GM12878 (cell line): ENCODE measurements at regions of chr16 and their contacts with region 1.

Region 1: GRCh38 chr16:35631261-35631945 is 2172.0 kb downstream of the TP53TG3F start:
- DNase-seq: no peak
- ATAC-seq: no peak
- H3K4me3 ChIP-seq: no peak overlapping the region
- H3K27ac ChIP-seq: no peak overlapping the region
- H3K4me1 ChIP-seq: no peaks in the 10 kb centered on the region
- H3K27me3 ChIP-seq: no peaks in the 10 kb centered on the region
- CTCF ChIP-seq: no peak
- EP300 ChIP-seq: no peak
- POLR2A ChIP-seq: no peak
- RAD21 ChIP-seq: no peak

Region 2: DNA sequence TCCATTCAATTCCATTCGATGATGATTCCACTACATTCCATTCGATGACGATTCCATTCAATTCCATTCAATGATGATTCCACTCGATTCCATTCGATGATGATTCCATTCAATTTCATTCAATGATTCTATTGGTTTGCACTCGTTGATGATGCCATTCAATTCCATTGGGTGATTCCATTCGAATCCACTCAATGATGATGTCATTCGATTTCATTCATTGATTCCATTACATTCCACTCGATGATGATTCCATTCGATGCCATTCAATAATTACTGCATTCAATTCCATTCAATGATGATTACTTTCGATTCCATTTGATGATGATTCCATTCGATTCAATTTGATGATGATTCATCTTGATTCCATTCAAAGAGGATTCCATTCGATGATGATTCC is 872.6 kb before region 1 on chr16:
- CTCF ChIA-PET with region 1: no interaction called
- POLR2A ChIA-PET with region 1: no interaction called
- RAD21 ChIA-PET with region 1: no interaction called
- SMC1A ChIA-PET with region 1: no interaction called
- in situ Hi-C with region 1: loop called (anchors 25 kb)
- intact Hi-C with region 1: no loop called
- DNase-seq: no peak
- ATAC-seq: no peak
- H3K4me3 ChIP-seq: no peak overlapping the region
- H3K27ac ChIP-seq: no peak overlapping the region
- H3K4me1 ChIP-seq: no peaks in the 10 kb centered on the region
- H3K27me3 ChIP-seq: no peaks in the 10 kb centered on the region
- CTCF ChIP-seq: no peak
- EP300 ChIP-seq: no peak
- POLR2A ChIP-seq: no peak
- RAD21 ChIP-seq: no peak

Region 3: DNA sequence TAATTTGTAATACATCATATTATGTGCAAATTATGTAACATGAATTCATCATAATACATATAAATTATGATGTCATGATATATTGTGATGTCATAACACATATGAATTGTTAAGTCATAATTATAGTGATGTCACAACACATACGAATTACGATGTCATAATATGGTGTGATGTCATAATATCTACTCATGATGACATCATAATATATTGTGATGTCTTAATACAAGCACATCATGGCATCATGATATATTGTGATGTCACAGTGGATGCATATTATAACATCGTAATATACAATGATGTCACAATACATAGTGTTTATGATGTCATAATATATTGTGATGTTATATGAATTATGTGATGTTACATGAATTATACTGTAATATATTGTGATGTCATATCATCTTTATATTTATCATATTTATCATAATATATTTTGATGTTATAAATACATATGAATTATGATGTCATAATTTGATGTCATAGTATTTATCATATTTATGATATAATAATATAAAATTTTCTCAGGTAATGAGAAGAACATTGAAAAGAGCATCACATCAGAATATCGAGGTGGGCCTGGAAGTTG is 379.0 kb before region 1 on chr16:
- CTCF ChIA-PET with region 1: no interaction called
- POLR2A ChIA-PET with region 1: no interaction called
- RAD21 ChIA-PET with region 1: no interaction called
- SMC1A ChIA-PET with region 1: no interaction called
- in situ Hi-C with region 1: loop called (anchors 25 kb)
- intact Hi-C with region 1: no loop called
- DNase-seq: no peak
- ATAC-seq: no peak
- H3K4me3 ChIP-seq: no peak overlapping the region
- H3K27ac ChIP-seq: no peak overlapping the region
- H3K4me1 ChIP-seq: no peaks in the 10 kb centered on the region
- H3K27me3 ChIP-seq: no peaks in the 10 kb centered on the region
- CTCF ChIP-seq: no peak
- EP300 ChIP-seq: no peak
- POLR2A ChIP-seq: no peak
- RAD21 ChIP-seq: no peak

Region 4: DNA sequence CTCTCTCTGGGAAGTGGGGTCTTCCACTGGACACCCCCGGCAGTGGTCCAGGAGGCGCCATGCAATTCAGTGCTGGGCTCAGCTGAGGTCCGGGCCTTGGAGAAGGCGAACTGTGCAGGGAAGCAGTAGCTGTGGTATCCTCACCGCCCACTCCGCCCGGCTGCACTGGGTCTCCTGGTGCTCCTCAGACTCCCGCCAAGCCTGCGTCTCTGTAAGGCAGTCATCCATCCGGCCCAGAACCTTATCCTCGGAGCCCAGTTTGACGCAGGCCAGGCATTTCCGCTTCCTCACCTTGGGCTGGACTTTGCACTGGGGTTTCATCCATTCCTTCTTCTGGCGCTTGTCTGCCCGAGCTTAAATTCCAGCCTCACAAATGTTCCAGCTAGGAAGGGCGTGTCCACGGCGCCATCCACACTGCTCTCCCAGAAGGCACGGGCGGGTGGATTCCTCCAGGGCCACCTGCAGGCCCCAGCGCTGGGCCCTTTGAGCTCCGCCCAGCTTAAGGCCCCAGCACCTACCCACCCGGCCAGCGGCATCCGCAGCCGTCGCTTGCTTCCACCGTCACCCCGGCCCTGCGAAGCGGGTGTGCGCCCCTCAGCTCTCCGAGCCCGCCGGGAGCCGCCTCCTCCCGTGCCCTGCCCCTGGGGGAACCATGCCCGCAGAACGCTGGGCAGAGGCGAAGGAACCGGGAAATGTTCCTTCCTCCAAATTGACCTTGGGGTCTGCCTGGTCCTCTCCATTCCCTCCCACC is 287.2 kb before region 1 on chr16:
- CTCF ChIA-PET with region 1: no interaction called
- POLR2A ChIA-PET with region 1: no interaction called
- RAD21 ChIA-PET with region 1: no interaction called
- SMC1A ChIA-PET with region 1: no interaction called
- in situ Hi-C with region 1: no loop called
- intact Hi-C with region 1: no loop called
- DNase-seq: no peak
- ATAC-seq: no peak
- H3K4me3 ChIP-seq: no peak overlapping the region
- H3K27ac ChIP-seq: no peak overlapping the region
- H3K4me1 ChIP-seq: no peaks in the 10 kb centered on the region
- H3K27me3 ChIP-seq: no peaks in the 10 kb centered on the region
- CTCF ChIP-seq: no peak
- EP300 ChIP-seq: no peak
- POLR2A ChIP-seq: no peak
- RAD21 ChIP-seq: no peak

Region 5: DNA sequence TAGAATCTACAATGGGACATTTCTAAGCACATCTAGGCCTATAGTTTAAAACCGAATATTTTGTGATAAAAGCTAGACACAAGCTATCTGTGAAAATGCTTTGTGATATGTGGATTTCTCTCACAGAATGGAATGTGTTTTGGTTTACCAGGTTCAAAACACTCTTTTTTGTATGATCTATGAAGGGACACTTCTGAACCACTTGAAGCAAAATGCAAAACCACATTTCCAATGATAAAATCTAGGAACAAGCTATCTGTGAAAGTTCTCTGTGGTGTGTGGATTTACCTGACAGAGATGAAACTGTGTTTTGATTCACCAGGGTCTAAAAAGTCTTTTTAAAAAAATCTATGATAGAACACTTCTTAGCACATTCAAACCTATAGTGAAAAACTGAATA is 20.4 kb after region 1 on chr16:
- CTCF ChIA-PET with region 1: no interaction called
- POLR2A ChIA-PET with region 1: no interaction called
- RAD21 ChIA-PET with region 1: interaction called, 3 read pairs
- SMC1A ChIA-PET with region 1: interaction called, 11 read pairs
- in situ Hi-C with region 1: no loop called
- intact Hi-C with region 1: no loop called
- DNase-seq: no peak
- ATAC-seq: no peak
- H3K4me3 ChIP-seq: no peak overlapping the region
- H3K27ac ChIP-seq: no peak overlapping the region
- H3K4me1 ChIP-seq: no peaks in the 10 kb centered on the region
- H3K27me3 ChIP-seq: no peaks in the 10 kb centered on the region
- CTCF ChIP-seq: no peak
- EP300 ChIP-seq: no peak
- POLR2A ChIP-seq: no peak
- RAD21 ChIP-seq: no peak